ENCODE measurements at regions of chr5 and their contacts with region 1.

Region 1: GRCh38 chr5:6632917-6633468 is at the starts of genes NSUN2 and SRD5A1:
- DNase-seq: peak; percentile 87 to 93 (median 90)
- H3K4me3 ChIP-seq: peak within 1 kb of the TSS; percentile 84 to 94 (median 84)
- H3K4me3 Mint-ChIP-seq: peak within 1 kb of the TSS; percentile 86 to 98
- H3K27ac ChIP-seq: peak within 1 kb of the TSS; percentile 89 to 94
- H3K27ac Mint-ChIP-seq: peak within 1 kb of the TSS; percentile 96 to 99 (median 99)
- H3K4me1 ChIP-seq: peaks cover 27 to 41% of the 10 kb centered on the region in 2 donors
- H3K4me1 Mint-ChIP-seq: peaks cover 54% of the 10 kb centered on the region
- H3K27me3 ChIP-seq: no peaks in the 10 kb centered on the region
- H3K27me3 Mint-ChIP-seq: peaks cover 1 to 8% (median 1%) of the 10 kb centered on the region in 3 donors
- CTCF ChIP-seq: no peak
- polyA plus RNA-seq, gene NSUN2: 24.4 to 63.4 (median 25.6) TPM
- polyA plus RNA-seq, gene SRD5A1: 21.2 to 34.7 (median 26.0) TPM

Region 2: DNA sequence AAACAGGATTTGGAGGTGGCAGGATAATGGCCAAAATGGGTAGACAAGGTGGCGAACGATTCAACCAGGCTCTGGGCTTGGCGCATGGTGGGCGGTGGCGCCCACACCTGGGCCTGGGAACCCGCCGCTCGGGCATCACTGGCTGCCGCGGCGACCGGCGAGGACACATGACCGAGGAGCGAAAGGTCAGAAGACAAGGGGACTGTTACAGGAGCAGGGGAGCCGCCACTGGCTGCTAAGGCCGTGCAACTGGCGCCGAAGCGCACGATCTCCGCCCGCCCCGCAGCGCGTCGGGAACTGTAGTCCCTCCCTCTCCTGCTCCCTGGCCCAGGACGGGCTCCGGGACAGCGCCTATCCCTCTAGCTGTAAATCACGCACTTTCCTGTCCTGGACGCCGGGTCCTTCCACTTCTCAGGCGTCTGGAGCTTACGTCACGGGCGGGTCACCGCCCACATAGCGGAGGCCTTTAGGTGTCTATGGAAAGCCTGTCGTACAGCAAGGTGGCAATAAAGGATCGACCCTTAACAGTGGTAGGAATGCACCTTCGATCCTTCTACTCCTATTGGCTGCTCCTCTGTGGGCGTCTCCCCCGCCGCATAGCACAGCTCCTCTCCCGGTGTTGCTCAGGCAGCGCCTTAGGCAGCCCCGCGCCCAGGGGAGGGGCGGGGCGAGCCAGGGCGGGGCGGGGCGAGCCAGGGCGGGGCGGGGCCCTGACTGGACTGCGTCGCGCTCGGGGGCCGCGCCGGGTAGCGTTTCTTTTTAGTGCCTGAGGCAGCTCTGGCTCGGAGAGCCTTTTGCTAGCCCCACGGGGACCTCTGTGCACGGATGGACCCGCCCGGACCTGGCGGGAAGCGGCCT is 1210.8 kb before region 1 on chr5 and contains the start of gene ICE1:
- intact Hi-C with region 1: loop called (anchors 5 to 10 kb)
- DNase-seq: peak; percentile 97 to 98 (median 97)
- H3K4me3 ChIP-seq: peak within 1 kb of the TSS; percentile 54 to 89 (median 62)
- H3K4me3 Mint-ChIP-seq: peak within 1 kb of the TSS; percentile 92 to 95
- H3K27ac ChIP-seq: peak within 1 kb of the TSS; percentile 85 to 94
- H3K27ac Mint-ChIP-seq: peak within 1 kb of the TSS; percentile 94 to 97 (median 97)
- H3K4me1 ChIP-seq: peaks cover 22 to 34% of the 10 kb centered on the region in 2 donors
- H3K4me1 Mint-ChIP-seq: peaks cover 15% of the 10 kb centered on the region
- H3K27me3 ChIP-seq: no peaks in the 10 kb centered on the region
- H3K27me3 Mint-ChIP-seq: peaks cover 0 to 5% (median 3%) of the 10 kb centered on the region in 3 donors
- CTCF ChIP-seq: no peak
- polyA plus RNA-seq, gene ICE1: 2.4 to 8.2 (median 6.4) TPM

Region 3: GRCh38 chr5:6430418-6431028 is 202.5 kb before region 1 on chr5:
- intact Hi-C with region 1: no loop called
- DNase-seq: no peak
- H3K4me3 ChIP-seq: no peak overlapping the region
- H3K4me3 Mint-ChIP-seq: no peak overlapping the region
- H3K27ac ChIP-seq: no peak overlapping the region
- H3K27ac Mint-ChIP-seq: no peak overlapping the region
- H3K4me1 ChIP-seq: no peaks in the 10 kb centered on the region
- H3K4me1 Mint-ChIP-seq: no peaks in the 10 kb centered on the region
- H3K27me3 ChIP-seq: no peaks in the 10 kb centered on the region
- H3K27me3 Mint-ChIP-seq: peaks cover 7 to 14% (median 12%) of the 10 kb centered on the region in 3 donors
- CTCF ChIP-seq: no peak

Region 4: GRCh38 chr5:6712577-6713275 is 79.7 kb after region 1 on chr5:
- intact Hi-C with region 1: loop called (anchors 2 kb)
- DNase-seq: peak; percentile 95 to 98 (median 96)
- H3K4me3 ChIP-seq: peak overlapping the region; percentile 83 to 90 (median 89)
- H3K4me3 Mint-ChIP-seq: peak overlapping the region; percentile 88 to 94
- H3K27ac ChIP-seq: peak overlapping the region; percentile 82 to 96
- H3K27ac Mint-ChIP-seq: peak overlapping the region; percentile 91 to 97 (median 96)
- H3K4me1 ChIP-seq: peaks cover 36 to 41% of the 10 kb centered on the region in 2 donors
- H3K4me1 Mint-ChIP-seq: peaks cover 45% of the 10 kb centered on the region
- H3K27me3 ChIP-seq: no peaks in the 10 kb centered on the region
- H3K27me3 Mint-ChIP-seq: peaks cover 3 to 9% (median 8%) of the 10 kb centered on the region in 3 donors
- CTCF ChIP-seq: no peak

Region 5: GRCh38 chr5:6745706-6746222 is 112.8 kb after region 1 on chr5:
- intact Hi-C with region 1: loop called (anchors 10 kb)
- DNase-seq: peak; percentile 36 to 60 (median 52)
- H3K4me3 ChIP-seq: no peak overlapping the region
- H3K4me3 Mint-ChIP-seq: no peak overlapping the region
- H3K27ac ChIP-seq: no peak overlapping the region
- H3K27ac Mint-ChIP-seq: peak overlapping the region in 1 of 7 donors; percentile 26
- H3K4me1 ChIP-seq: no peaks in the 10 kb centered on the region
- H3K4me1 Mint-ChIP-seq: no peaks in the 10 kb centered on the region
- H3K27me3 ChIP-seq: no peaks in the 10 kb centered on the region
- H3K27me3 Mint-ChIP-seq: peaks cover 0 to 2% (median 0%) of the 10 kb centered on the region in 3 donors
- CTCF ChIP-seq: peak; percentile 90

Region 6: GRCh38 chr5:7868773-7869473 is 1235.9 kb after region 1 on chr5 and contains the starts of genes FASTKD3 and MTRR:
- intact Hi-C with region 1: loop called in 1 of 2 experiments (anchors 10 kb)
- DNase-seq: peak; percentile 85 to 89 (median 88)
- H3K4me3 ChIP-seq: peak within 1 kb of the TSS; percentile 66 to 88 (median 83)
- H3K4me3 Mint-ChIP-seq: peak within 1 kb of the TSS; percentile 87 to 96
- H3K27ac ChIP-seq: peak within 1 kb of the TSS; percentile 41 to 85
- H3K27ac Mint-ChIP-seq: peak within 1 kb of the TSS; percentile 82 to 93 (median 90)
- H3K4me1 ChIP-seq: peaks cover 17 to 27% of the 10 kb centered on the region in 2 donors
- H3K4me1 Mint-ChIP-seq: peaks cover 44% of the 10 kb centered on the region
- H3K27me3 ChIP-seq: no peaks in the 10 kb centered on the region
- H3K27me3 Mint-ChIP-seq: no peaks in the 10 kb centered on the region
- CTCF ChIP-seq: no peak
- polyA plus RNA-seq, gene FASTKD3: 7.2 to 15.5 (median 10.7) TPM
- polyA plus RNA-seq, gene MTRR: 18.0 to 25.5 (median 22.1) TPM